ENCODE measurements at regions of chr15 and their contacts with region 1.

Region 1: GRCh38 chr15:98881526-98882520 is 125.8 kb downstream of the PGPEP1L start:
- DNase-seq: no peak
- ATAC-seq: peak; percentile 49
- H3K4me3 Mint-ChIP-seq: no peak overlapping the region
- H3K27ac Mint-ChIP-seq: no peak overlapping the region
- H3K4me1 Mint-ChIP-seq: no peaks in the 10 kb centered on the region
- H3K27me3 Mint-ChIP-seq: no peaks in the 10 kb centered on the region

Region 2: GRCh38 chr15:98518823-98519561 is 362.8 kb before region 1 on chr15:
- CTCF ChIA-PET with region 1: interaction called, 10 read pairs
- DNase-seq: peak; percentile 51
- ATAC-seq: peak; percentile 69
- H3K4me3 Mint-ChIP-seq: no peak overlapping the region
- H3K27ac Mint-ChIP-seq: no peak overlapping the region
- H3K4me1 Mint-ChIP-seq: peaks cover 4% of the 10 kb centered on the region
- H3K27me3 Mint-ChIP-seq: no peaks in the 10 kb centered on the region

Region 3: DNA sequence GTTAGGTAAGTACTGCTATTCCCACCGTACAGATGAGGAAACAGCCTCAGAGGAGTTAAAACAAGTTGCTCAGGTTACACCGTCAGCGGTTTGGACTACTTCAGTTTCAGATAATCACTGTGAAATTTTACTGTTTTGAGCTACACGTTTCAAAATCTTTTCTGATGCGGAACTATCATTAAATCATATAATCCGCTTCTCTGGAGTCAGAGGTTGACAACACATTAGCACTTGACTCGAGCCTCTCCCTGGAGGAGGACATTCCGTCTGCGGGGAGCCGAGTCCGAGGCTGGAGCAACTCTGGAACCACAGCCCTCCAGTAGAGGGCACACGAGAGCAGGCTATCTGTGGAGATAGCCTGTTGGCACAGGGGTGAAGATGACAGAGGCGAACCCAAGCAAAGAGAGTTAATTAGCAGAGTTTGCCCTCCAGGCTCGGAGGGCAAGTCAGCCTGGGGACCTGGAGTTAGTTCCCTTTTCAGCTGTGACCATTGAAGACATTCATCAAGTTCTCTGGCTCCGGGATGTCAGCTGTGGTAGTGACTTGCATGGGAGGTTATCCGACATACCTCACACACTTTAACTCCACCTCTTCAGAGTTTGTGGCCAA is 102.3 kb before region 1 on chr15:
- CTCF ChIA-PET with region 1: interaction called, 19 read pairs
- DNase-seq: peak; percentile 71
- ATAC-seq: peak; percentile 88
- H3K4me3 Mint-ChIP-seq: no peak overlapping the region
- H3K27ac Mint-ChIP-seq: no peak overlapping the region
- H3K4me1 Mint-ChIP-seq: peaks cover 16% of the 10 kb centered on the region
- H3K27me3 Mint-ChIP-seq: peaks cover 13% of the 10 kb centered on the region

Region 4: DNA sequence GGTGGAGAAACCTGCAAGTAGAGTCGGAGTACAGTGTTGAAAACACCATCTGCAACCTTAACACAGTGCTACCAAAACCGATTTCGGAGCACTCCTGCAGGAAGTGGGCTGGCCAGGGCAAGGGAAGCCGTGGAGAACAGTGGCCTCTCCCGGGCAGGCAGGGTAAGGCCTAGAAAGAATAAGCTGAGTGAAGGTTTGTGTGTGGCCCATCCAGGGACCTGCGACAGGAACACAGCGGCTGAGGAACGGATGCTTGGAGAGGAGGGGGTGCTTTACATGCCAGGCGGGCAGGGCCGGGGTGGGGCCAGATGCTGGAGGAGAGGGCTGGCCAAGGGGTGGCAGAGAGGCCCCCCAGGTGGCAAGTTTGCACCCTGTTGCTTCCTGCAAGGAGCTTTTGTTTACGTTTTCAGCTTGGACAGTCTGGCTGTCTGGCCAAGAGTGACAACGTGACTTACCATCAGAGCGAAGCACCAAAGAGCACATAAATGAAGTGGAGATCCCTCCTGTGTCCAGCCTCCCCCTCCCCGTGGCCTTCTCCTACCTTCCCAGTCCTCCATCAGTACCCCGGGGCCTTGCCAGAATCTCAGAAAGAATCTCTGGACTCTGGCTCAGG is 30.8 kb before region 1 on chr15:
- CTCF ChIA-PET with region 1: interaction called, 11 read pairs
- DNase-seq: peak; percentile 82
- ATAC-seq: peak; percentile 53
- H3K4me3 Mint-ChIP-seq: peak overlapping the region; percentile 79
- H3K27ac Mint-ChIP-seq: peak overlapping the region; percentile 86
- H3K4me1 Mint-ChIP-seq: peaks cover 29% of the 10 kb centered on the region
- H3K27me3 Mint-ChIP-seq: peaks cover 4% of the 10 kb centered on the region

Region 5: DNA sequence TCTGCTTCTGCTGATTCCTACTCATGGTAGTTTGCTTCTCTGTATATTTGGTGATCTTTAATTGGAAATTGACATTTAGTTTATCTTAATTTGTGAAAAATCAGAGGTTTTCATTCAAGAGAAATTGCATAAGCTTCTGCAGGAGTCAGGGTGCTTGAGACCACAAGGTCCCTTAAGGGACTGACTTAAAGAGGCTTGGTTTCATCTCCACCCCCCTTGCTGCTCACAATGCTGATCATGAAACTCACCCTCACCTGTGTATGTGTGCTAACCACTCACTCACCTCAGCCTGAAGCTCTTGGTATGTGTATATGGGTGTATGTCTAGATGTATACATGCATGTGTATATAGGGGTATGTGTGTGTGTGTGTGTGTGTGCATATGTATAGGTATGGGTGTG is 114.3 kb after region 1 on chr15:
- CTCF ChIA-PET with region 1: no interaction called
- DNase-seq: no peak
- ATAC-seq: no peak
- H3K4me3 Mint-ChIP-seq: no peak overlapping the region
- H3K27ac Mint-ChIP-seq: no peak overlapping the region
- H3K4me1 Mint-ChIP-seq: no peaks in the 10 kb centered on the region
- H3K27me3 Mint-ChIP-seq: peaks cover 26% of the 10 kb centered on the region

Region 6: DNA sequence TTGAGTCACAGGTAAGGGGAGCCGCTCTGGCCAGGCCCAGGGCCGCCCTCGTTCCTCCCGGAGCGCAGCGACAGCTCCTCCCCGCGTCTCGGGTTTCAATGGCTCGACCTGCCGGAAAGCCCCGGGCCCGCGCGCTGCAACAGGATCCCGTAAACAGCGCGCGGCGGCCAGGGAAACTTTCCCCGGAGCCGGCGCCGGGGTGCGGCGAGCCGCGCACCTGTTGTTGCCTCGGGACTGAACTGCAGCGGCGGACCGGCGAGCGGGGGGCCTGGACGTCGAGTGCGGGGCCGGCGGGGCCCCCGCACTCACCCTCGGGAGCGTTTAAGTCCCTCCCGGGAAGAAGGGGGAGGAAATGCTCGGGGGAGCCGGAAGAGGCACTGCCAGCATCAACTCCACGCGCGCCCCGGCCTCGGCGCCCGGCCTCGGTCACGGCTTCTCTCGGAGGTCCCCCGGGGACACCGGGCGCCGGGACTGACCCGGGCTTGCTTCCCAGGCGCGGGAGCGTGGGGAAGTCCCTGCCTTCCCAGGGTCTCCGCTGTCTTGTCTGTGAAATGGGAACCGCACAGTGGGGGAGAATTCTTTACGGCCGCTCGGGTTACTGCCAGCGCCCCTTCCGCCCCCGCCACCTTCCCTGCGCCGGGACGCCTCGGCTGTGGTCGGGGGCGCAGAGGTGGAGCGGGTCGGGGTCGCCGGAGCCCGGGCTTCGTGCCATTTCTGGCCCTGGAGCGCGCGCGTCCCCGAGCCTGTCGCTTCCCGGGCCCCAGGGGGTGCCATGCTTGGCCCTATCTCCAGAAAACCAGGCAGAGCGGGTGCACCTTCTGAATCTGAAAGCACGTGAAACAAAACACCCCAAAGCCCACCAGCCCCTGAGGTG is 133.2 kb after region 1 on chr15:
- CTCF ChIA-PET with region 1: no interaction called
- DNase-seq: no peak
- ATAC-seq: peak; percentile 83
- H3K4me3 Mint-ChIP-seq: peak overlapping the region; percentile 24
- H3K27ac Mint-ChIP-seq: no peak overlapping the region
- H3K4me1 Mint-ChIP-seq: peaks cover 2% of the 10 kb centered on the region
- H3K27me3 Mint-ChIP-seq: peaks cover 34% of the 10 kb centered on the region

Measured in activated CD8-positive, alpha-beta memory T cell treated with anti-CD3 and anti-CD28 coated beads, Interleukin-2, amount 10 ng/mL, durations not matched to agents 7 days and 5 days (primary cell).